Left cardiac atrium (tissue), 4 donors: ENCODE measurements at regions of chr16 and their contacts with region 1.

Region 1: GRCh38 chr16:68396481-68396880 is 51.8 kb downstream of the SMPD3 start:
- DNase-seq: no peak
- ATAC-seq: peak; percentile 19 to 38

Region 2: DNA sequence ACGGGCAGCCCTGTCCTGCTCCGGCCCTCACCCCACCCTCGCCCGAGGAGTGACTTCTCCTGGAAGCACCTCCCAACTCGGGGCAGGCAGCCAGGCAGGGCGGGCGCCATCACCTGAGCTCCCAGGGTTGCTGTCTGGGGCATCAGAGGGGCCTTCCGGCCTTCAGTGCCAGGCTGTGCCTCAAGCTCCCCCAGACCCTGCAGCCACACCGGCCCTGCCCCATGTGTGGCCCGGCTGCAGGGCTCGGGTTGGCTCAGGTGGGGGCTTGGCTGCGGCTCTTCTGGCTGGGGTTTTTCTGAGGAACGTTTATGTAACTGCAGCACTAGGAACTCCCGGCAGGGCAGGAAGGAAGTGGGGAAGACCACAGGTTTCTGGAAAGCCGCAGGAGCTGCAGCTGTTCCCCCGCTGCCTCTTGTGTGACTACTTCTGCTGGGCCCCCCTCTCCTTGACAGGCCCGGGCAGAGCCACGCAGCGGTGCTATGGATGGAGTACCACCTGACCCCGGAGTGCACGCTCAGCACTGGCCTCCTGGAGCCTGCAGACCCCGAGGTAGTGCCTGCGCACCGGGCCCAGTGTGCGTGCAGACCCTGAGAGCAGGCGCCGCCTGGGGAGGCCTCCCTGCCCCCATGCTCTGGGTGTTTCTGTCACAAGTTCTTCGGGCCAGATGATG is 40.1 kb before region 1 on chr16:
- intact Hi-C with region 1: no loop called
- DNase-seq: no peak
- ATAC-seq: peak; percentile 18 to 38

Region 3: DNA sequence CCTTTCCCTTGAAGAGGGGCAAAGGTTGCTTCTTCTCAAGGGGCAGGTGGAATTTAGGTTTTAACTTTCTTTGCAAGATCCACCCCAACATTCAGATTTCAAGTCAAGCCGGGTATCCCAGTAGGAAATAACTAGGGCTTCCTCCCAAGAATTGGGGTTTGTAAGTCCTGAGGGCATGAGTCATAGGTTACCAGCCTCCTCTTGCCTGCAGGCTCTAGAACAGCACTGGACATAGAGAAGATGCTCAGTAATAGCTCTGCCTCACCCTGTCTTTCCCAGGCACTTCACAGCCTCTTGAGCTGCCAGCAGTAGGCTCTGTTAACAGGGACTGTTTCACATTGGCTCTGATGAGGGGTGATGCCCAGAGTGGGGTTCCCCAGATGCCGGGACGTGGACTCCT is 106.9 kb after region 1 on chr16:
- intact Hi-C with region 1: loop called in 1 of 2 experiments (anchors 10 kb)
- DNase-seq: no peak
- ATAC-seq: peak in 1 of 2 donors; percentile 67

Region 4: GRCh38 chr16:68517606-68518166 is 121.2 kb after region 1 on chr16:
- intact Hi-C with region 1: loop called in 1 of 2 experiments (anchors 10 kb)
- DNase-seq: no peak
- ATAC-seq: no peak